Activated CD4-positive, alpha-beta T cell treated with anti-CD3 and anti-CD28 coated beads, Interleukin-2, amount 10 ng/mL, durations not matched to agents 24 days and 14 days (primary cell): ENCODE measurements at regions of chr3 and their contacts with region 1.

Region 1: GRCh38 chr3:59286791-59287531 is 237.1 kb upstream of the CFAP20DC start:
- DNase-seq: peak; percentile 74
- H3K4me3 Mint-ChIP-seq: peak overlapping the region; percentile 55
- H3K27ac Mint-ChIP-seq: peak overlapping the region; percentile 94
- H3K4me1 Mint-ChIP-seq: peaks cover 32% of the 10 kb centered on the region
- H3K27me3 Mint-ChIP-seq: no peaks in the 10 kb centered on the region

Region 2: DNA sequence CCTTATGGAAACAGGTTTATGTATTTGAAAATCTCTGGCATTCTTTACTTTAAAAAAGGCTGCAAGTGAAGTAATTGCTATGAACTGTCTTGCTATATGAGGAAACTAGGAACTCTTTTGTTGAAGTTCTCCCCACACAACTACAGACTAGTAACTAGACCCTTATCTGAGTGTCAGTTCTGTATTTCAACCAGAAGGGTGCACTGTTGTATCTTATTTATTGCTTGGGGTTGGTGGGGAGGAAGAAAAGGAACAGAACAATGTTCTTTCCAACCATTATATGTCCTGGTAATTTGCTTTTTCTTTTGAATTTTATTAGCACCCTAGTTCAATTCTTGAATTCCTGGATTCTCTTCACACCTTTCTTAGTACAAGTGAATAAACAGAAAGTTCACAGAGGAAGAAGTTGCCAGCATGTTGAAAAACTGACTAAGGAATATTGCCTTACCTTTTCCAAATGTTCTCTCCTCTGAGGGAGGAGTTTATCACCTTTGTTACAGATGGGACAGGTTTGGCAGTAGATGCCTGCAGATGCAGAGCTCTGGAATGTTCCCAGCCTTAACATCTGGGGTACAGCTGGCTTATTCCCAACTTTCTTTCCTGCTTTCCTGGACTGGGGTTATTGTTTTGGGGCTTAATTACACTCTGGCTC is 74.7 kb before region 1 on chr3:
- intact Hi-C with region 1: loop called (anchors 1 kb)
- DNase-seq: peak; percentile 73
- H3K4me3 Mint-ChIP-seq: no peak overlapping the region
- H3K27ac Mint-ChIP-seq: no peak overlapping the region
- H3K4me1 Mint-ChIP-seq: peaks cover 9% of the 10 kb centered on the region
- H3K27me3 Mint-ChIP-seq: peaks cover 11% of the 10 kb centered on the region

Region 3: DNA sequence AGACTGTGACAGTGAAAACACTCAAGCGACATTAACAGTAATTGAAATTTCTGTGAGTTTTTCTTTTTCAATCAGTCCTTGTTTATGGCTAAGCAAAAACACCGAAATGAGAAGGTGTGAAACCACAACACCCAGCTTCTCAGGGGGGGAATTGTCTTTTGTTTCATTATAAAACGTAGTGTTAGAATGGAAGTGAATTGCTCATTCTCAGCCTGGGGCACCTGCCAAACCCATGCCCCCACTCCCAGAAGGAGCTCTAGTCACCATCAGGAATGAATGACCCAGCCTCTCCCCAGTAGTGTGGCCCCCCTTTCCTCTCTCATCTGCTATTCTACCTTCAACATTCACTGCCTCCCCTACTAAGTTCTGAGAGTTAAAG is 51.3 kb before region 1 on chr3:
- intact Hi-C with region 1: loop called (anchors 1 kb)
- DNase-seq: peak; percentile 76
- H3K4me3 Mint-ChIP-seq: peak overlapping the region; percentile 4
- H3K27ac Mint-ChIP-seq: peak overlapping the region; percentile 66
- H3K4me1 Mint-ChIP-seq: peaks cover 17% of the 10 kb centered on the region
- H3K27me3 Mint-ChIP-seq: no peaks in the 10 kb centered on the region

Region 4: DNA sequence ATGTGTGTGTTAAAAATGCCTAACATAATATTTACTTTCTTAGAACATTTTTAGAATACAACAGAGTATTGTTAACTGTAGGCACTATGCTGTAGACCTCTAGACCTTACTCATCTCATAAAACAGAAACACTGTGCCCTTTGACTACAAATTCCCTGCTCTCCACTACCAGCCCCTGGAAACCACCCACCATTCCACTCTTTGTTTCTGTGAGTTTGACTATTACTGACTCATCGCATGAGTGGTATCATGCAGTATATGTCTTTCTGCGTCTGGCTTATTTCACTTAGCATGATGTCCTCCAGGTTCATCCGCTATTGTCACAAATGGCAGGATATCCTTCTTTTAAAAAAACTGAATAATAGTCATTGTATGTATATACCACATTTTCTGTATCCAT is 20.4 kb before region 1 on chr3:
- intact Hi-C with region 1: loop called (anchors 2 kb)
- DNase-seq: no peak
- H3K4me3 Mint-ChIP-seq: no peak overlapping the region
- H3K27ac Mint-ChIP-seq: no peak overlapping the region
- H3K4me1 Mint-ChIP-seq: peaks cover 2% of the 10 kb centered on the region
- H3K27me3 Mint-ChIP-seq: no peaks in the 10 kb centered on the region

Region 5: GRCh38 chr3:59424268-59425010 is 137.5 kb after region 1 on chr3:
- intact Hi-C with region 1: loop called (anchors 2 kb)
- DNase-seq: peak; percentile 71
- H3K4me3 Mint-ChIP-seq: peak overlapping the region; percentile 1
- H3K27ac Mint-ChIP-seq: peak overlapping the region; percentile 73
- H3K4me1 Mint-ChIP-seq: peaks cover 52% of the 10 kb centered on the region
- H3K27me3 Mint-ChIP-seq: no peaks in the 10 kb centered on the region

Region 6: GRCh38 chr3:59456852-59457485 is 170.0 kb after region 1 on chr3:
- intact Hi-C with region 1: loop called (anchors 2 kb)
- DNase-seq: peak; percentile 77
- H3K4me3 Mint-ChIP-seq: no peak overlapping the region
- H3K27ac Mint-ChIP-seq: peak overlapping the region; percentile 59
- H3K4me1 Mint-ChIP-seq: peaks cover 34% of the 10 kb centered on the region
- H3K27me3 Mint-ChIP-seq: no peaks in the 10 kb centered on the region